ENCODE measurements at regions of chr11 and their contacts with region 1.

Region 1: DNA sequence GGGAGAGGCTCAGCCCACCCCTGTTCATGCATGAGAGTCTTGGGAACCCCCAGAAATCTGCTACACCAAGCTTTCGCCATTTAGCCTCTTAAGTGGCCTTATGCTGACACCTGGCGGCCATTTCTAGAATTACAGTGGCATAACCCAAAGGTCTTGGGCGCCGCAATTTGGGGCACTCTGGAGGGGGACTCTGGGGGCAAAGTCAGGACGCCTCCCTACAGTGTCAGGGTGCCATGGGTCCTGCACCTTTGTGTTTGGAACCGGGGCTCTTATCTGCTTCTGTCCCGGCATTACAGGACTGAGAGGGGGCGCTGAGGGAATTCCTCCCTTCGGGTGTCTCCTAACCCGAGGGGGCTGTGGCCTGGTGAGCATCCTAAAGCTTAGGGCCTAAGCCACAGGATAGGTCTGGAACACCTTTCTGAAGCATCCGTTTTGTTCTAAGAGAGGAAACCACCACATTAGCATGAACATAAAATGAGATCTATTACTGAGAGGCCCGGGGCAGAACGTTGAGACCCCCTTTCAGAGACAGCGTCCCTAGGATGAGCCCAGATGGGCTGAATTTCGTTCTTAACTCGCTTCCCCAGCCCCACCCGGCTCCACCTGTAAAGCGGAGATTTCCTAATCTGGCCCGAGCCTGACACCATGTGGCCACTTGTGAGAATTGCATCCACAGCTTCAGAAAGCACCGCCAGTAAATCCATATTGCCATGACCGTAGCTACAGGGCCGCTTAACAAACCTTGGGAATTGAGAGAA is 9.3 kb downstream of the INS start:
- DNase-seq: peak; percentile 74 to 89 (median 83)
- H3K4me3 ChIP-seq: no peak overlapping the region
- H3K27ac ChIP-seq: no peak overlapping the region
- H3K4me1 ChIP-seq: peaks cover 0 to 7% (median 2%) of the 10 kb centered on the region in 4 experiments
- H3K27me3 ChIP-seq: peaks cover 0 to 48% (median 23%) of the 10 kb centered on the region in 5 experiments

Region 2: DNA sequence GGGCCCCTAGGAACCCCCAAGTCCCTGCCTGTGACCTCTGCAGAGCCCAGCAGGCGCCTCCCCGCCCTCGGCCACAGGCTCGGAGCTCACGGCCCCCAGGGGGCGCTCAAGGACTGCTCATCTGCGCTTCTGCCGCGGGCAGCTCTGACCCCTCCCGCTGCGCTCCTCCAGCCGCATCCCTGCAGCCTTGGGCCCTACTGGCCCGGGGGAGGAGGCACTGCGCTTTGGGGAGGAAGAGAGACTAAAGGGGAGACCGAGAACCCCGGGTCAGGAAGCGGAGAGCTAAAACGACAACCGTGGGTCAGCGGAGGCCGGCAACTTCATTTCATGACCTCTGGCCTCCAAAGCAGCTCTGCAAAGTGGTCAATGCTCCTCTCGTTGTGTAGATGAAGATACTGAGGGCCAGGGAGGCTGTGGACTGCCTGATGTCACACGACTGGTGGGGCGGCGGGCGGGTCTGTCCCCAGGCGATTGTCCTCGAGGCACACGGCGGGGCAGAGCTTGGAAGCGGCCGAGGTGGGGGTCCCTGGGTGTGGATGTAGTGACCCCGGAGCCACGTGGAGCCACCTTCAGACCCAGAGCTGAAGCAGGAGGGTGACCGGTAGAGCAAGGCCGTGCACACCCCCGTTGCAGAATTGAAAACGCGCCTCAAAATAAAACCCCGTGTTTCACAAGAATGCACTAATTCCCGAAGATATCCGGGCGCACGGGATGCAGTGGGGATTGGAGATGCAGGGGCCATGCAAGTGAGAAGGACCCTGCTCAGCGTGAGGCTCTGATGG is 457.4 kb before region 1 on chr11:
- CTCF ChIA-PET with region 1: interaction called, 16 read pairs
- POLR2A ChIA-PET with region 1: no interaction called
- DNase-seq: peak; percentile 71 to 82 (median 79)
- H3K4me3 ChIP-seq: peak overlapping the region in 3 of 7 experiments; percentile 57 to 69 (median 63)
- H3K27ac ChIP-seq: no peak overlapping the region
- H3K4me1 ChIP-seq: peaks cover 0 to 27% (median 22%) of the 10 kb centered on the region in 4 experiments
- H3K27me3 ChIP-seq: peaks cover 0 to 3% (median 0%) of the 10 kb centered on the region in 5 experiments

Region 3: GRCh38 chr11:1837171-1838076 is 314.3 kb before region 1 on chr11:
- CTCF ChIA-PET with region 1: interaction called, 52 read pairs
- POLR2A ChIA-PET with region 1: no interaction called
- DNase-seq: peak; percentile 79 to 90 (median 88)
- H3K4me3 ChIP-seq: no peak overlapping the region
- H3K27ac ChIP-seq: no peak overlapping the region
- H3K4me1 ChIP-seq: peaks cover 0 to 54% (median 38%) of the 10 kb centered on the region in 4 experiments
- H3K27me3 ChIP-seq: peaks cover 0 to 2% (median 0%) of the 10 kb centered on the region in 5 experiments

Region 4: GRCh38 chr11:1882519-1883238 is 269.0 kb before region 1 on chr11:
- CTCF ChIA-PET with region 1: interaction called, 27 read pairs
- POLR2A ChIA-PET with region 1: no interaction called
- DNase-seq: peak; percentile 67 to 83 (median 81)
- H3K4me3 ChIP-seq: no peak overlapping the region
- H3K27ac ChIP-seq: no peak overlapping the region
- H3K4me1 ChIP-seq: peaks cover 0 to 55% (median 49%) of the 10 kb centered on the region in 4 experiments
- H3K27me3 ChIP-seq: no peaks in the 10 kb centered on the region

Region 5: GRCh38 chr11:1953489-1954266 is 198.0 kb before region 1 on chr11:
- CTCF ChIA-PET with region 1: interaction called, 44 read pairs
- POLR2A ChIA-PET with region 1: no interaction called
- DNase-seq: peak in 2 of 3 donors; percentile 17 to 28
- H3K4me3 ChIP-seq: no peak overlapping the region
- H3K27ac ChIP-seq: no peak overlapping the region
- H3K4me1 ChIP-seq: no peaks in the 10 kb centered on the region
- H3K27me3 ChIP-seq: no peaks in the 10 kb centered on the region

Region 6: GRCh38 chr11:2027708-2028107 is 124.0 kb before region 1 on chr11:
- CTCF ChIA-PET with region 1: interaction called, 341 read pairs
- POLR2A ChIA-PET with region 1: no interaction called
- DNase-seq: no peak
- H3K4me3 ChIP-seq: no peak overlapping the region
- H3K27ac ChIP-seq: no peak overlapping the region
- H3K4me1 ChIP-seq: no peaks in the 10 kb centered on the region
- H3K27me3 ChIP-seq: no peaks in the 10 kb centered on the region

Region 7: DNA sequence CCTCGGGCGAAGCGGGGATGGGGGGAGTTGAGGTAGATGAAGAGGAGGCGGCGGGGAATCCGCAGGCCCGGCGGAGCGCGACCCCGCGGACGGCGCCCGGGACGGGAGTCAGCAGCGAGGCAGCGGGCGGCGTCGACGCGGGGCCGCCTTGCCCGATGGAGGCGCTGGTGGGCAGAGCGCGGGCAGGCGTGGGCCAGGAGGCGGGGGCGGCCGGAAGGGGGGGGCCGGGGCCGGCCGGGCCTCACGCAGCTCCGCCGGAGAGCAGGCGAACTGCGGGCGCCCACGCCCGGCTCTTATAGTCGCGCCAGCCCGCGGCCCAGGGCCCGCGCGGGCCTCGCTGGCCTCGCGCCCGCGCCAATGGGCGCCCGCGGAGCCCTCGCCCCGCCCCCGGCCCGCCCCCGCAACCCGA is 12.6 kb before region 1 on chr11 and contains the start of gene IGF2:
- CTCF ChIA-PET with region 1: interaction called, 19 read pairs
- POLR2A ChIA-PET with region 1: no interaction called
- DNase-seq: peak in 2 of 3 donors; percentile 29 to 45
- H3K4me3 ChIP-seq: peak within 1 kb of the TSS in 3 of 7 experiments; percentile 8 to 50 (median 15)
- H3K27ac ChIP-seq: no peak within 1 kb of the TSS
- H3K4me1 ChIP-seq: peaks cover 0 to 28% (median 14%) of the 10 kb centered on the region in 4 experiments
- H3K27me3 ChIP-seq: peaks cover 8 to 97% (median 44%) of the 10 kb centered on the region in 5 experiments